ENCODE measurements at regions of chr14 and their contacts with region 1.

Region 1: GRCh38 chr14:75293920-75294642 is 15.5 kb downstream of the FOS start:
- DNase-seq: peak; percentile 96
- H3K4me3 Mint-ChIP-seq: peak overlapping the region; percentile 67
- H3K27ac Mint-ChIP-seq: peak overlapping the region; percentile 71
- H3K4me1 Mint-ChIP-seq: peaks cover 22% of the 10 kb centered on the region
- H3K27me3 Mint-ChIP-seq: no peaks in the 10 kb centered on the region
- CTCF ChIP-seq: no peak

Region 2: DNA sequence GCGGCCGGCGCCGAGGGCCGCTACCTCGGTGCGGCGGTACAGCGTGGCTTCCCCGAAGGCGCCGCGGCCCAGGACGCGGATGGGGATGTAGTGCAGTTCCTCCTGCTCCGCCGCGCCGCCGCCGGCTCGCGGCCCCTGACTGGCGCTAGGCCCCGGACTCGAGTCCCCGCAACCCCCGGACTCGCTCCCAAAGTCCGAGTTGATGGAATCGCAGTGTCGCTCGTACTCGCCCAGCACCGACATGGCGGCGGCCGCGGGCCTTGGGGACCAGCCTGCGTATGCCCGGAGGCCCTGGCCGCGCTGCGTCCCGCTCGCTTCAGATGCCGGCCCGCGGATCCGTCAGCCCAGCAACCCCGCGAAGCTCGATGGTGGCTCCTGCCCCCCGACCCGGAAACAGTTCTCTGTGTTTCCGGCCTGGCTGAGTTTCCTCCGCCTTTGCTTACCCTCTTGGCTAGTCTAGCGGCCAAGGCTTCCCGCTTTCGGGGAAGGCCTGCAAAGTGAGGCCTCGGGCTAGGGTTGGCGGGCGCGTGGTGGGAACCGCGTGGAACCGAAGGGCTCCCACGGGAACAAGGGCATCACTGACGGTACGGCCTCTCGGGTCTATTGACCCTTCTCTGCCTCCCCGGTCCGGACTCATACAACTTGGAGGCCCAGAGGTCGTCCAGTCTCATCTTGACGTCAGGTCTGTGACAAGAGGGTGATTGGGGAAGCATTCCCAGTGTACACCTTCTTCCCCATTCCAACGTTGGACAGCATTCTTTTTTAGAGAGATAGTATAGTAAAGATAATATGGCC is 167.2 kb before region 1 on chr14 and contains the start of gene NEK9:
- CTCF ChIA-PET with region 1: interaction called, 192 read pairs
- POLR2A ChIA-PET with region 1: interaction called, 274 read pairs
- intact Hi-C with region 1: loop called (anchors 1 kb)
- DNase-seq: peak; percentile 88
- H3K4me3 Mint-ChIP-seq: peak within 1 kb of the TSS; percentile 72
- H3K27ac Mint-ChIP-seq: peak within 1 kb of the TSS; percentile 99
- H3K4me1 Mint-ChIP-seq: peaks cover 33% of the 10 kb centered on the region
- H3K27me3 Mint-ChIP-seq: no peaks in the 10 kb centered on the region
- CTCF ChIP-seq: no peak
- total RNA-seq, gene NEK9: 112 and 113 TPM in 2 replicates

Region 3: GRCh38 chr14:75138492-75138891 is 155.6 kb before region 1 on chr14:
- CTCF ChIA-PET with region 1: interaction called, 73 read pairs
- POLR2A ChIA-PET with region 1: interaction called, 90 read pairs
- intact Hi-C with region 1: no loop called
- DNase-seq: no peak
- H3K4me3 Mint-ChIP-seq: no peak overlapping the region
- H3K27ac Mint-ChIP-seq: peak overlapping the region; percentile 85
- H3K4me1 Mint-ChIP-seq: peaks cover 31% of the 10 kb centered on the region
- H3K27me3 Mint-ChIP-seq: no peaks in the 10 kb centered on the region
- CTCF ChIP-seq: no peak

Region 4: DNA sequence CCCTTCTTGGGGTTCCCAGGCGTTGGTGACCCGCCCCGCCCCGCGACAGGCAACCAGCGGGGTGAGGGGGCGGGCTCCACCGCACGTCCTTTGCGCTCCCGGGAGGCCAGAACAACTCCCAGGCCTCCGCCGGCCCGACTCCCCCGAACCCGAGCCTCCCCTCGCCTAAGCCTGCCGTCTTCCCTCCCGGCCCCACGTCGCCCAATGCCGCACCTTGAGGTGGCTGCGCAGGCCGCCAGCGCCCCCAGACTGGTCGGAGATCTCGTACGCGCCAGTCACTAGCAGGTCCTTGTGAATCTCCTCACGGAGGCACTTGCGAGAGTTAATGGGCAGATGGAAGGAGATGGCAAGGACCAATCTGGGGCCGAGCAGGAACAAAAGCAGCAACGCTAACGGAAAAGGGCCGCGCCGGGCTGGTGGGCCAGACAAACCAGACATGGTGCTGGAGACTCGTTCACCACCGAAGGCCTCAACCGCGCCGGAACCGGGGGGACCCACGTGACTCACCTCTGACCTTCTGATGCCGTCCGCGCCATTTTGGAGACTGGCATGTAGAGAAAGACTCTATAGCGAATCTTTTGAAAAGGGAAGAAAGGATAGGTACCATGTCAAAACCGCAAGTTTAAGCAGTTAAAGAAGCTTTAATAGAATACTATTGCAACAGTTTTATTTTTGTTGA is 117.8 kb before region 1 on chr14 and contains the start of gene TMED10:
- CTCF ChIA-PET with region 1: interaction called, 4 read pairs
- POLR2A ChIA-PET with region 1: interaction called, 80 read pairs
- intact Hi-C with region 1: loop called (anchors 1 kb)
- DNase-seq: peak; percentile 93
- H3K4me3 Mint-ChIP-seq: peak within 1 kb of the TSS; percentile 98
- H3K27ac Mint-ChIP-seq: peak within 1 kb of the TSS; percentile 99
- H3K4me1 Mint-ChIP-seq: peaks cover 22% of the 10 kb centered on the region
- H3K27me3 Mint-ChIP-seq: no peaks in the 10 kb centered on the region
- CTCF ChIP-seq: no peak
- total RNA-seq, gene TMED10: 454 and 526 TPM in 2 replicates

Region 5: DNA sequence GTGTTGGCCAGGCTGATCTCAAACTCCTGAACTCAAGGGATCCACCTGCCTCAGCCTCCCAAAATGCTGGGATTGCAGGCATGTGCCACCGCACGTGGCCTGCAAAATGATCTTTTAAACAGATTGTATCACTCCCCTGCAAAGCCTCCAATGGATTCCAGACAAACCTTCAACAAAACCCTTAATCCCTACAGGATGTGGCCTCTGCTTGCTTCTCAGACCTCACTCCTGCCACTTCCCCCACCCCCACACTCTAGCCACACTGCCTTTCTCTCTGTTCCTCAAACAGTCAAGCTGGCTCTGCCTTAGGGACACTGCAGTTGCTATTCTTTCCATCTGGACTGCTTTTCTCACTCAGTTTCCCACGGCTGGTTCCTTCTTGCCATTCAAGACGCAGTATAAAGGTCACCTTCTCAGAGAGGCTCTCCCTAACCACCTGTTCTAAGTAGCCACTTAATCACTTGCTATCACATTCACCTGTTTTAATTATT is 70.4 kb before region 1 on chr14:
- CTCF ChIA-PET with region 1: interaction called, 5 read pairs
- POLR2A ChIA-PET with region 1: interaction called, 12 read pairs
- intact Hi-C with region 1: no loop called
- DNase-seq: no peak
- H3K4me3 Mint-ChIP-seq: no peak overlapping the region
- H3K27ac Mint-ChIP-seq: no peak overlapping the region
- H3K4me1 Mint-ChIP-seq: peaks cover 34% of the 10 kb centered on the region
- H3K27me3 Mint-ChIP-seq: no peaks in the 10 kb centered on the region
- CTCF ChIP-seq: no peak

Measured in MCF 10A (cell line).